ENCODE measurements at regions of chr1 and their contacts with region 1.

Region 1: GRCh38 chr1:10209905-10210810 is at the start of gene KIF1B:
- DNase-seq: peak; percentile 99
- H3K4me3 ChIP-seq: peak within 1 kb of the TSS; percentile 57 to 93 (median 64)
- H3K27ac ChIP-seq: peak within 1 kb of the TSS; percentile 96 to 100 (median 99)
- H3K4me1 ChIP-seq: peaks cover 20 to 33% of the 10 kb centered on the region in 2 donors
- H3K27me3 ChIP-seq: no peaks in the 10 kb centered on the region
- CTCF ChIP-seq: peak; percentile 93 to 100 (median 97)
- POLR2A ChIP-seq: peak; percentile 96 to 100
- total RNA-seq, gene KIF1B: 34.1 to 67.2 (median 51.4) TPM

Region 2: DNA sequence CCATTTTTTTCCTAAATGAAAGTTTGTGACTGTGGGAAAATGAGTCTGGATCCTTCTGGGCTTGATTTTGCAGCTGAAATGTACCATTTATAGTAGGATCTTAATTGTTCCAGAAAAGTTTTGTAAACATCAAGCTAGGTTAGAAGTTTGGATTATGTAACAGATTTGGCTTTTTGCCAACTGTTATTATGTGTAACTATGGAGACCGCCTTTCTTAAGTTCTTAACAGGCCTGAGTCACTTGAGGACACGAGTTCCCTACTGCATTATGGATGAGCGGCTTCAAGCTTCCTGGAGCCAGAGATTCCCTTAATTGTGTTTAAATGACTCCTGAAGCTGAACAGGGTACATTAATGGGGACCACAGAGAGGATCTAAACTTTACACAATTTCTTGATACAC is 648.7 kb before region 1 on chr1:
- intact Hi-C with region 1: no loop called
- DNase-seq: peak in 6 of 7 donors; percentile 44 to 81 (median 64)
- H3K4me3 ChIP-seq: no peak overlapping the region
- H3K27ac ChIP-seq: peak overlapping the region in 3 of 5 donors; percentile 29 to 53 (median 53)
- H3K4me1 ChIP-seq: peaks cover 0 to 14% of the 10 kb centered on the region in 2 donors
- H3K27me3 ChIP-seq: no peaks in the 10 kb centered on the region
- CTCF ChIP-seq: no peak
- POLR2A ChIP-seq: no peak

Region 3: DNA sequence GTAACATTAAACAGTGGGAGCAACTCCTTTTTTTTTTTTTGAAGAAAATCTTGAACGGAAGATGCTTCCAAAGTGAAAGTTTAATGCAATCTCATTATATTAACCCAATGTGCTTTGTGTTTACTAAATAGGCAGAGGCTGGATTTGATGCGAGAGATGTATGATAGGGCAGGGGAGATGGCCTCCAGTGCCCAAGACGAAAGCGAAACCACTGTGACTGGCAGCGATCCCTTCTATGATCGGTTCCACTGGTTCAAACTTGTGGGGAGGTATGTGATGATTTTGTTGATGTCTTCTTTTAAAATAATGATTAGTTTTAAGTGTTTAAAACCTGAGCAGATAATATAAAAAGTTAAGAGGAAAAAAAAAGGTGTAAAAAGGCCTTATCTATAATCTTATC is 114.5 kb after region 1 on chr1:
- intact Hi-C with region 1: loop called in 1 of 2 experiments (anchors 10 kb)
- DNase-seq: no peak
- H3K4me3 ChIP-seq: no peak overlapping the region
- H3K27ac ChIP-seq: no peak overlapping the region
- H3K4me1 ChIP-seq: no peaks in the 10 kb centered on the region
- H3K27me3 ChIP-seq: no peaks in the 10 kb centered on the region
- CTCF ChIP-seq: no peak
- POLR2A ChIP-seq: no peak

Region 4: DNA sequence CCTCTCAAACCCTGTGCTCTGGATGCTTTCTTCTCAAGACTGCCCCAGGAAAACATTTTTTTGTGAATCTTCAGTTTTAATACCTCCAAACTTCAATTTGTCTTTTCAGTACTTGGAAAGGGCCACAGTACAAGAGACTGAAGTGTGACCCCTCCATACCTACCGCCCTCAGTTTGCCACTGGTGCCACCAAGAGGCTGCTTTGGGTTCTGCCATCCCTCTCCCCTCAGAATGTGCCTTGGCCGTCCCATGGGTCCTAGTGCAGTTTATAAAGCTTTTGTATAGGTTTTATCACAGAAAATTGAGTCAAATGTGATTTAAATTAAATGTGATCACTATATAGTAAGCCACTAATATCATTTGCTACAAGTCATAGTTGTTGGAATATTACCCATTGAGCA is 127.9 kb after region 1 on chr1:
- intact Hi-C with region 1: loop called in 1 of 2 experiments (anchors 10 kb)
- DNase-seq: peak; percentile 26 to 70 (median 48)
- H3K4me3 ChIP-seq: no peak overlapping the region
- H3K27ac ChIP-seq: no peak overlapping the region
- H3K4me1 ChIP-seq: peaks cover 0 to 7% of the 10 kb centered on the region in 2 donors
- H3K27me3 ChIP-seq: no peaks in the 10 kb centered on the region
- CTCF ChIP-seq: peak; percentile 31 to 66 (median 60)
- POLR2A ChIP-seq: no peak

Measured in adrenal gland (tissue), 19 donors.